H1 (cell line): ENCODE measurements at regions of chr14 and their contacts with region 1.

Region 1: DNA sequence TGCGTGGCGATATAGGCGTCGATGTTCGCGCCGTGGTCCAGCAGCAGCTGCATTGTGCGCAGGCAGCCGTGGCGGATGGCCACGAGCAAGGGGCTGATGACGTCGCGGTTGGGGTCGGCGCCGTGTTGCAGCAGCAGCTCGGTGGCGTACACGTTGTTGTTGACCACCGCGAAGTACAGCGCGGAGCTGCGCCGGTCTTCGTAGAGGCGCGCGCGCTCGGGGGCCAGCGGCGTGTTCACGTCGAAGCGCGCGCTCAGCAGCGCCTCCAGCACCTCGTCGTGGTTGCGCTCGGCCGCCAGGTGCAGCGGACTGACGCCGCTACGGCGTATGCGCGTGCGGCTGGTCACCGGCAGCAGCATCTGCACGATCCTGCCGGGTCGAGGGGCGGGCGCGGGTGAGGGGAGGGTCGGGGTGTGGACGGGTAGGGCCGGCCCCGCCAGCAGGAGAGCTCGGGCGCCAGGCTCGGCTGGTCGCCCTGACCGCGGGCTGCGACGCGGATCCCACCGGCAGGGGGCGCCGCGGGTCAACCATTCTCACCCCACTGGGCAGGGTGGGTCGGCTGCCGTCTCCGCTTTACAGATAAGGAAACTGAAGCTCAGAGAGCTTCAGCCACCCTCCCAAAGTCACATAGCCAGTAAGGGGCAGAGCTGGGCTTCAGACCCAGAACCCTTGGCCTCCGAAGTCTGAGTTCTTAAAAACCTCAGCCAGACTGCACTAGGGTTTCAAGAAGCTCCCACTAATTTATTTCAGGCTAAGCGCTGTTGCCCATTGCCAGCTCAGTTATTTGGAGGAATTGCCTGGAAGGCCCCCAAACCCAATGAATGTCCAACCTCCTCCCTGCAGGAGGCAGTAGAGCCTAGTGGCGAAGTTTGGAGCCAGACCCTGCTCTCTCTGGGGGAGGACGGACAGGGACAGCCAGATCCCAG is 12.4 kb downstream of the FAM181A start:
- DNase-seq: peak; percentile 78 to 99
- H3K4me3 ChIP-seq: peak overlapping the region; percentile 36 to 53 (median 40)
- H3K27ac ChIP-seq: no peak overlapping the region
- H3K4me1 ChIP-seq: peaks cover 0 to 14% (median 8%) of the 10 kb centered on the region in 4 experiments; a peak in 4 of 7 replicates
- H3K27me3 ChIP-seq: peaks cover 7 to 25% (median 17%) of the 10 kb centered on the region in 4 experiments
- CTCF ChIP-seq: peak; percentile 74 to 98 (median 83)
- EP300 ChIP-seq: 0 out of 3 replicates have a peak, but pooled peaks of 1 of the 2 experiments have one; percentile 48
- POLR2A ChIP-seq: no peak
- RAD21 ChIP-seq: peak; percentile 73 to 82

Region 2: DNA sequence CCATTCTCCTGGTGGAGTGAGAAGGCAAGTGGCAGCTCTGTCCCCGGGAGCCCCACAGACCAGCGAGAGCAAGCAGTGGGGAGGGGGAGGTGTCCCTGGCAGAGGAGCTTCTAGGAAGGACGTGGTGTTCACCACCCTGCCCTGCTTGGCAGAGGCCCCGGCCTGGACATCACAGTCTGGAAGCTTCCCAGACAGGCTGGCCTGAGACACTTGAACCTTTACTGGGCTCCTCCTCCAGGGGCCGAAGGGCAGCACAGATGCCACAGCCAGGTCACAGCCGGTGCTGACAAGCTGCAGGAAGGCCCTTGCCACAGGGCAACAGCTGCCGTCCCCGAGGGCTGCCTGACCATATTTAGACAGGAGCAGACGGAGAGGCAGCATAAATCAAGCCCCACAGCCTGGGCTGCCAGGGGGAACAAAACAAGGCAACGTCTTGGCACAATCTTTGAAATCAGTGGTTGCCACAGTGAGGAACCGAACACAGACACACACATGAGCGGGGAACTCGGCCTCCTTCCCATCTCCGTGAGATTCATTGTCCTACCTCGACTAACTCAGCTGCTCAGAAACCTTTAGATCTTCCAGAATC is 179.8 kb before region 1 on chr14:
- CTCF ChIA-PET with region 1: no interaction called
- POLR2A ChIA-PET with region 1: no interaction called
- DNase-seq: no peak
- H3K4me3 ChIP-seq: no peak overlapping the region
- H3K27ac ChIP-seq: no peak overlapping the region
- H3K4me1 ChIP-seq: no peaks in the 10 kb centered on the region; a peak in 1 of 7 replicates
- H3K27me3 ChIP-seq: no peaks in the 10 kb centered on the region
- CTCF ChIP-seq: no peak
- EP300 ChIP-seq: no peak
- POLR2A ChIP-seq: no peak
- RAD21 ChIP-seq: no peak

Region 3: GRCh38 chr14:93892923-93893558 is 46.5 kb before region 1 on chr14:
- CTCF ChIA-PET with region 1: interaction called, 10 read pairs
- POLR2A ChIA-PET with region 1: no interaction called
- DNase-seq: peak; percentile 46 to 98
- H3K4me3 ChIP-seq: peak overlapping the region in 1 of 4 experiments; percentile 10; a peak in 1 of 8 replicates
- H3K27ac ChIP-seq: no peak overlapping the region
- H3K4me1 ChIP-seq: peaks cover 4 to 20% (median 10%) of the 10 kb centered on the region in 4 experiments
- H3K27me3 ChIP-seq: no peaks in the 10 kb centered on the region; a peak in 1 of 7 replicates
- CTCF ChIP-seq: peak; percentile 88 to 96 (median 90)
- EP300 ChIP-seq: no peak
- POLR2A ChIP-seq: no peak
- RAD21 ChIP-seq: peak; percentile 71 to 82

Region 4: DNA sequence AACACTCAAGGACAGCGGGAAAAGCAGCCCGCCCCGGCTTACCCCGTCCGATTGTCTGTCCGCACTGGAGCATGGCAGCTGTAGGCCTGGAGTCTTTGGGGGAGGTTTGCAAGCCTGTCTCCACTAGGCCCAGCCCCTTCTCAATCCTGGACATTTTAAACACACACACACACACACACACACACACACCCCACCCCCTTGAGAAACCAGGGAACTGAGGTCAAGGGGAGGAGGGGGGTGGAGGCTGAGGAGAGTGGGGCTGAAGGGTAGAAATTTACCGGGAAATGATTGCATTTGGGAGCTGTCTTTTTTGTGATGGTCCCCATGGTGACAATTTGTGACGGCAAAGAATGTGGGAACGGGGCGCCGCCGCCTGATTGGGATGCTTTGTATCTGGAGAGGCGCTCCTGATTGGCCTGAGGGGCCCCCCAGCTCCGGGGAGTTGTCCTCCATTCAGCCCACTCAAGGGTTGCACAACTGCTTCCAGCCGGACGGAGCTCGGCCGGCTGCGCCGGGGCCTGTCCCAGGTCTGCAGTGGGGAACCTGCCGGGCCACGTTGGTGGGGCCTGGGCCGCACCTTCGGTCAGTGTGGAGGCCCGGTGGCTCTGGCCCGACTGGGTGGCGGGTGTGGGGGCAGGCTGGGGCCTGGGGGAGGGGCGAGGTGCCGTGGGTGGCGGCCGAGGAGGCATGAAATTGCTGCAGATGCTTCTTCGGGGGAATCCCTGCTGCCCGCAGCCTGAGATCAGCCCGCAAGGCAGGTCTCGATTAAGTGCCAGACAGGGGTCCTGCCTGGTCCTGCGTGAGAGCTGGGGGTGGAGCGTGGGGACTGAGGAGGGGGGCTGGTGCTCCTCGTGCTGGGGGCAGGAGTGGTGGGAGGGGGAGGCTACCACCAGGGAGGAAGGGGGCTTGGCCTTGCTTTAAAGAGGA is 12.4 kb before region 1 on chr14 and contains the start of gene FAM181A:
- CTCF ChIA-PET with region 1: interaction called, 29 read pairs
- POLR2A ChIA-PET with region 1: interaction called, 4 read pairs
- DNase-seq: no peak
- H3K4me3 ChIP-seq: no peak within 1 kb of the TSS
- H3K27ac ChIP-seq: no peak within 1 kb of the TSS
- H3K4me1 ChIP-seq: peaks cover 0 to 5% (median 0%) of the 10 kb centered on the region in 4 experiments; a peak in 1 of 7 replicates
- H3K27me3 ChIP-seq: no peaks in the 10 kb centered on the region
- CTCF ChIP-seq: no peak
- EP300 ChIP-seq: no peak
- POLR2A ChIP-seq: no peak
- RAD21 ChIP-seq: no peak
- total RNA-seq, gene FAM181A: not detected in 2 replicates

Region 5: GRCh38 chr14:93970549-93970946 is 31.0 kb after region 1 on chr14:
- CTCF ChIA-PET with region 1: interaction called, 50 read pairs
- POLR2A ChIA-PET with region 1: interaction called, 4 read pairs
- DNase-seq: no peak
- H3K4me3 ChIP-seq: no peak overlapping the region
- H3K27ac ChIP-seq: no peak overlapping the region
- H3K4me1 ChIP-seq: peaks cover 0 to 1% (median 0%) of the 10 kb centered on the region in 4 experiments; a peak in 1 of 7 replicates
- H3K27me3 ChIP-seq: no peaks in the 10 kb centered on the region
- CTCF ChIP-seq: peak; percentile 59 to 70 (median 61)
- EP300 ChIP-seq: no peak
- POLR2A ChIP-seq: no peak
- RAD21 ChIP-seq: peak; percentile 53 to 71

Region 6: DNA sequence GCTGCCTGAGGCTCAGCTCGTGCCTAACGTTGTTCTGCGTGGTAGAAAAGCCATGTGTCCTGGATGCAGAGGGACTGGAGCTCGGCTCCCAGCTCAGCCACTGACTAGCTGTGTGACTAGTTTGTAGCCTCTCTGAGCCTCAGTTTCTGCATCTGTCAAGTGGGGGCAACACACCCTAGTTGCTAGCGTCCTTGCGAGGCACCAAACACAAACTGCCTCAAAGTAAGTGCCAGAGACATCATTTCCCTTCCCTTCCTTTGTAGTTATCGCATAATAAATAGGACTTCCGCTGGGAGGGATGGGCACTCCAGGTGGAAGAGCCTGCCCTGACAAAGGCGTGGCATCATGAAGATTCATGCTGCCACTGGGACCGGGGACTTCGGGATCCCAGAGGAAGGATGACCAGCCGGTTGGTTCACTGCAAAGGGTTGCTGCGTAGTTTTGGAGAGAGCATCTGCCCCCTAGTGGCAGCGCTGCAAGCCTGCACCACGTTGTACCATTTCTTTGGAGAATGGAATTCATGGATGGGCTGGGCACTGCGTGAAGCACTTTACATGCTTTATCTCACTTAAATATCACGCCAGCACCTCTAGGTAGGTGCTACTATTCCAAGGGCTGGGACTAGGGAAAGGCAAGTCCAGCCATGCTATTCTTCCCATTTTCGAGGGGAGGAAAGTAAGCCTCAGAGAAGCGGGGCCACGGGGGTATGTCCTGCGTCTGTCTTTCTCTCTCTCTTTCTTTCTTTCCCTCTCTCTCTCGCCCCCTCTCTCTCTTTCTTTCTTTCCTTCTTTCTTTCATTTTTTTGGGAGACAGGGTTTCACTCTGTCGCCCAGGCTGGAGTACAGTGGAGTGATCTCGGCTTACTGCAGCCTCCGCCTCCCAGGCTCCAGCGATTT is 62.2 kb after region 1 on chr14:
- CTCF ChIA-PET with region 1: interaction called, 484 read pairs
- POLR2A ChIA-PET with region 1: interaction called, 8 read pairs
- DNase-seq: peak; percentile 36 to 73
- H3K4me3 ChIP-seq: no peak overlapping the region
- H3K27ac ChIP-seq: no peak overlapping the region
- H3K4me1 ChIP-seq: peaks cover 0 to 3% (median 0%) of the 10 kb centered on the region in 4 experiments; a peak in 2 of 7 replicates
- H3K27me3 ChIP-seq: 0 out of 7 replicates have a peak, but pooled peaks cover 0 to 2% (median 0%) of the 10 kb centered on the region in 4 experiments
- CTCF ChIP-seq: peak; percentile 93 to 99 (median 97)
- EP300 ChIP-seq: no peak
- POLR2A ChIP-seq: no peak
- RAD21 ChIP-seq: peak; percentile 89 to 90

Region 7: DNA sequence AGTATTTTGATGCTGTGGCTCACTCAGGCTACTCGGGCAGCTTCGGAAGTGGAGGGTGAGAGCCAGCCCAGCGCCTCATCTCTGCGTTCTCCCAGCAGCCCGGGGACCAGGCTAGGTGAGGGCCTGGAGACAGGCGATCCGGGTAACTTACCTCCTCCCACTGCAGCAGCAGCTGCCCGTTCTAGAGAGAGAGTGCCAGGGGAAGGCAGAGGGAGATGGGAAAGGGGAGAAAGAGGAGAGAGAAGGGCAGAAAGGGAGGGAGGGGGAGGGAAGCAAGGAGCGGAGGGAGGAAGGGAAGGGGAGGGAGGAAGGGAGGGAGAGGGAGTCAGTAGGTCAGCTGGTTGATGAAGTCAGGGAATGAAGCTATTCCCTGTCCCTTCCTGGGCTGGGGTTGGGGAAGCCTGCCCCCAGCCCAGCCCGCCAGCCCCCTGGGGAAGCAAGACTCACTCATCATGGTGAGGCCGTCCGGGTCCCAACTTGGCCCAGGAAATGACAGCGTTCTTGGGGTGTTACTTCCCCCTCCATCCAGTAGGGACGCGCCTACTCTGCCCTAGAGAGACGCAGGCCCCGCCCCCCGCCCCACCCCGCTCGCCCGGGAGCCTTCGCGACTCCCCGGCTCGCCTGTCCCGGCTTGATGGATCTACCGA is 189.7 kb after region 1 on chr14 and contains the start of gene IFI27L2:
- CTCF ChIA-PET with region 1: interaction called, 12 read pairs
- POLR2A ChIA-PET with region 1: no interaction called
- DNase-seq: peak; percentile 47 to 79
- H3K4me3 ChIP-seq: peak within 1 kb of the TSS; percentile 54 to 65 (median 62)
- H3K27ac ChIP-seq: no peak within 1 kb of the TSS
- H3K4me1 ChIP-seq: peaks cover 0 to 4% (median 2%) of the 10 kb centered on the region in 4 experiments; a peak in 3 of 7 replicates
- H3K27me3 ChIP-seq: no peaks in the 10 kb centered on the region; a peak in 1 of 7 replicates
- CTCF ChIP-seq: peak in 2 of 3 experiments; percentile 17 to 42; a peak in 3 of 4 replicates
- EP300 ChIP-seq: no peak
- POLR2A ChIP-seq: 0 out of 3 replicates have a peak, but pooled peaks of 1 of the 2 experiments have one; percentile 23
- RAD21 ChIP-seq: 0 out of 4 replicates have a peak, but pooled peaks of 1 of the 2 experiments have one; percentile 9
- total RNA-seq, gene IFI27L2: 14.0 and 19.8 TPM in 2 replicates

Region 8: DNA sequence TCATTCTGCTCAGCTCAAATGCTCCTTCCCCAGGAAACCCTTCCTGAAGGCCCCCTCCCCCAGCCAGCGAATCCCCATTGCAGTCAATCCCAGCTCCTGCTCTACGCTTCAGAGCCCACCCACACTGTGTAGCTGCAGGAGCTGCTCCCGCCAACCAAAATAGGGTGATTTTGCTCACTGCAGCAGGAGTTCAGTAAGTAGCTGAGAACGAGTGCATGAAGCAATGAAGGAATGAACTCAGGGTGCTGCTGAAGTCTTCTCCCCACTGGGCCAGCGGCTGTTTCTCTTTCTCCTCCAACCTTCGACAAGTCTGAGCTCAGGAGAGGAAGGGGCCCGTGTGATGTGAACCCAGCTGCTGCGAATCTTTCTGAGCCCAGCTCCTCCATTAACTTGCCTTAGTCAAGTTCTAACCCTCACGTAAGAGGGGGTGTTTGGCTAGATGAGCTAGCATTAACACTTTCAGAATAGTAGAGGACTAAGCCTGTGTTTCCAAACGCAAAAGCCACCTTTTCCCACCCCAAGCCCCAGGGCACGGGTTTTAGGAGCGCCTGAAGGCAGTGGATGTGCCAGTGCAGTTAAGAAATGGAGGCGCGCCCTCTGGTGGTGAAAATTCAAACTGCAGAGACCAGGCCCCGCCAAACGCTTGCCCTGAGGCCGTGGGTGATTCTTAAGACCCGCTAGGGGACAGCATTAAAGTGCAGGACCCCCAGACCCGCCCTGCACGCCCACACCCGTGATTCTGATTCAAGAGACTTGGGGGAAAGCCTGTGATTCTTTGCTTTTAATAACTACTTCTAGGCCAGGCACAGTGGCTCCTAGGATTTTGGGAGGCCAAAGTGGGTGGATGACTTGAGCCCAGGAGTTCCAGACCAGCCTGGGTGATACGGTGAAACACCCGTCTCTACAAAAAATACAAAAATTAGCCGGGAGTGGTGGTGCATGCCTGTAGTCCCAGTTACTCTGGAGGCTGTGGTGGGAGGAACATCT is 609.7 kb after region 1 on chr14:
- CTCF ChIA-PET with region 1: no interaction called
- POLR2A ChIA-PET with region 1: no interaction called
- DNase-seq: peak; percentile 80 to 98
- H3K4me3 ChIP-seq: no peak overlapping the region
- H3K27ac ChIP-seq: no peak overlapping the region
- H3K4me1 ChIP-seq: peaks cover 0 to 8% (median 5%) of the 10 kb centered on the region in 4 experiments
- H3K27me3 ChIP-seq: no peaks in the 10 kb centered on the region
- CTCF ChIP-seq: peak; percentile 78 to 90 (median 86)
- EP300 ChIP-seq: no peak
- POLR2A ChIP-seq: no peak
- RAD21 ChIP-seq: peak; percentile 85 to 90